ENCODE measurements at regions of chr17 and their contacts with region 1.

Region 1: DNA sequence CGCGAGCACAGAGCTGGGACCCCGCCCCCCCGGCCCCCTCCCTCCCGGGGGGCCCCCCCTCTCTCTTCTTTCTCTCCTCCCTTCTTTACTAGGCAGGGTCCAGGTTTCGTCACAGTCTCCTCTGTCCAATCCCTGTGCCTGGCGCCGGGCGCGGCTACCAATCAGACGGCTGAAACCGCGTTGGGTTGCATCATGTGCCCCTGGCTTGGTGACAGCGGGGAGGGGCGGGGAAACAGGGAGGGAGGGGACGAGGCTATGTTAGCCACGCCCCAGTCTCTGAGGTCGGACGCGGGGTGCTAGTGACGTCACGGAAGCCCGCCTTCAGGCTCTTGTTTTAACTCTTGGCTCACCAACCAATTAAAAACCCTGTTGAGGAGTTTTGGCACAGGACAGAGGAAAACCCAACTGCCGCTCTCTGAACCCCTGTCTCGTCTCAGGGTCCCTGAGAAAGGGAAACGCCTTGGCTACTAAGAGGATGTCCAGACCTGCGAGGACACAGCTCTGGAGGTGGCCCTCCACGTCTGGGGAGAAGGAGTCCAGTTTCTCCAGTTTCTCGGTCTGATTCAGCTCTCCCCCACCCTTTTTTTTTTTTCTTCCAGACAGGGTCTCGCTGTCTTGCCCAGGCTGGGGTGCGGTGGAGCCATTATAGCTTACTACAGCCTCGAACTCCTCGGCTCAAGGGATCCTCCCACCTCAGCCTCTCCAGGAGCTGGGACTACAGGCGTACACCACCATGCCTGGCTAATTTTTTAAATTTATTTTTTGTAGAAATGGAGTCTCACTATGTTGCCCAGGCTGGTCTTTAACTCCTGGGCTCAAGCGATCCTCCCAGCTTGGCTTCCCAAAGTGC is 439 bp upstream of the PLEKHH3 start:
- DNase-seq: peak; percentile 94 to 98
- H3K4me3 ChIP-seq: peak overlapping the region; percentile 95
- H3K27ac ChIP-seq: peak overlapping the region; percentile 61
- H3K4me1 ChIP-seq: peaks cover 46% of the 10 kb centered on the region
- H3K27me3 ChIP-seq: no peaks in the 10 kb centered on the region
- CTCF ChIP-seq: no peak

Region 2: GRCh38 chr17:42329025-42329976 is 347.9 kb before region 1 on chr17:
- CTCF ChIA-PET with region 1: no interaction called
- POLR2A ChIA-PET with region 1: no interaction called
- intact Hi-C with region 1: loop called (anchors 5 kb)
- DNase-seq: peak; percentile 71 to 92
- H3K4me3 ChIP-seq: peak overlapping the region; percentile 42; the same call in 1 of the 2 replicates
- H3K27ac ChIP-seq: peak overlapping the region; percentile 96
- H3K4me1 ChIP-seq: peaks cover 69% of the 10 kb centered on the region
- H3K27me3 ChIP-seq: no peaks in the 10 kb centered on the region
- CTCF ChIP-seq: no peak

Region 3: DNA sequence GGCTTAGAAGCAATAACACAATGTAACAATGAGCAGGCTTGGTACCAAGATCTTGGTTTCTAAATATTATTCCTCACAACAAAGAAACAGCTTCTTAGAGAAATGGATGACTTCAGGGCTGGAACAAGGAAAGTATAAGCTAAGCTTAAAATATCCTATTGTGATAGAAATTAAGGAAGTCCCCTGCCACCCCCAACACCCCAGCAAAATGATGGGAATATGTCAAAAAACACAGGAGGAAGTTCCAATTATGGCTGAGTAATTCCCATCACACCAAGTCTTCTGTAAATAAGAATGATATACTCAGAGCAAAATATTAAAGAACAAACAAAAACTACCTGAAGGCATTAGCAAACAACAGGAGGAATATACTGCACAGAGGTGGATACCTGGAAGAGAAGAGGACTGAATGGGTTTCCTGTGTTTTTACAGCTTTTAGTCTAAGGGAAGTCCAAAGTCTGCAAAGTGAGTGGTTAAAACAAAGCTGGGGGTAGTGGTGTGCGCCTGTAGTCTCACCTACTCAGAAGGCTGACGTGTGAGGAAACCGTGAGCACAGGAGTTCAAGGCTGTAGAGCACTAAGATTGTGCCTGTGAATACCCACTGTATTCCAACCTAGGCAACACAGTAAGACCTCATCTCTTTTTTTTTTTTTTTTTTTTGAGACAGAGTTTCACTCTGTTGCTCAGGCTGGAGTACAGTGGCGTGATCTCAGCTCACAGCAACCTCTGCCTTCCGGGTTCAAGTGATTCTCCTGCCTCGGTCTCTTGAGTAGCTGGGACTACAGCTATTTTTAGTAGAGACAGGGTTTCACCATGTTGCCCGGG is 235.7 kb before region 1 on chr17:
- CTCF ChIA-PET with region 1: interaction called, 11 read pairs
- POLR2A ChIA-PET with region 1: no interaction called
- intact Hi-C with region 1: no loop called
- DNase-seq: no peak
- H3K4me3 ChIP-seq: no peak overlapping the region
- H3K27ac ChIP-seq: no peak overlapping the region
- H3K4me1 ChIP-seq: no peaks in the 10 kb centered on the region
- H3K27me3 ChIP-seq: no peaks in the 10 kb centered on the region
- CTCF ChIP-seq: no peak

Region 4: DNA sequence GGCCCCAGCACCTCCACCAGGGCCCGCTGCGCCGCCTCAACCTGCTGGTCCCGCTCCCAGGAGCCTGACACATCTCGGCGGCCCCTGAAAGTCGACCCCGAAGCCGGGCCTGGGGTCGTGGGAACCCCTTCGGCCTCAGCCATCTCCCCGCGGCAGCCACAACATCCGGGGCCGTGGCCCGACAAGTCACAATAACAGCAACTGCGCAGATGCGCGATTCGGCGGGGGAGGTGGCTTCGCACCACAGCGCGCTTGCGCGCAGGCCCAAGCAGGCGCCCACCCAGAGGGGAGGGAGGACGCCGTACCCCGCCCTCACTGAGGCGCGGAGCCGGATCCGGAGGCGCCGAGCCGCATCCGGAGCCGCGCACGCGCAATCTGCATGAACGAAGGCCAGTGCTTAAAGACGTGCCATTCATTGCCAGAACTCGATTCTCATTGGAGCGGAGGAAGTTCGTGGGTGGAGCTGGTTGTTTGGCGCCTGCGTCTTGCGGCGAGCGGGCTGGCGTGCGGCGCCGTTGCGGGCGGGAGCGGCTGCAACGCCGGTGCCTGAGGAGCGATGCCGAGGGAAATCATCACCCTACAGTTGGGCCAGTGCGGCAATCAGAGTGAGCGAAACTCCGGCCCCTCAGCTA is 67.9 kb before region 1 on chr17 and contains the starts of genes RETREG3 and TUBG1:
- CTCF ChIA-PET with region 1: interaction called, 3 read pairs
- POLR2A ChIA-PET with region 1: interaction called, 8 read pairs
- intact Hi-C with region 1: loop called (anchors 1 kb)
- DNase-seq: peak; percentile 94 to 99
- H3K4me3 ChIP-seq: peak within 1 kb of the TSS; percentile 99
- H3K27ac ChIP-seq: peak within 1 kb of the TSS; percentile 48
- H3K4me1 ChIP-seq: peaks cover 13% of the 10 kb centered on the region
- H3K27me3 ChIP-seq: no peaks in the 10 kb centered on the region
- CTCF ChIP-seq: peak; percentile 44; the same call in 1 of the 2 replicates
- total RNA-seq, gene RETREG3: 57.0 and 61.7 TPM in 2 replicates
- total RNA-seq, gene TUBG1: 79.1 and 85.6 TPM in 2 replicates

Region 5: DNA sequence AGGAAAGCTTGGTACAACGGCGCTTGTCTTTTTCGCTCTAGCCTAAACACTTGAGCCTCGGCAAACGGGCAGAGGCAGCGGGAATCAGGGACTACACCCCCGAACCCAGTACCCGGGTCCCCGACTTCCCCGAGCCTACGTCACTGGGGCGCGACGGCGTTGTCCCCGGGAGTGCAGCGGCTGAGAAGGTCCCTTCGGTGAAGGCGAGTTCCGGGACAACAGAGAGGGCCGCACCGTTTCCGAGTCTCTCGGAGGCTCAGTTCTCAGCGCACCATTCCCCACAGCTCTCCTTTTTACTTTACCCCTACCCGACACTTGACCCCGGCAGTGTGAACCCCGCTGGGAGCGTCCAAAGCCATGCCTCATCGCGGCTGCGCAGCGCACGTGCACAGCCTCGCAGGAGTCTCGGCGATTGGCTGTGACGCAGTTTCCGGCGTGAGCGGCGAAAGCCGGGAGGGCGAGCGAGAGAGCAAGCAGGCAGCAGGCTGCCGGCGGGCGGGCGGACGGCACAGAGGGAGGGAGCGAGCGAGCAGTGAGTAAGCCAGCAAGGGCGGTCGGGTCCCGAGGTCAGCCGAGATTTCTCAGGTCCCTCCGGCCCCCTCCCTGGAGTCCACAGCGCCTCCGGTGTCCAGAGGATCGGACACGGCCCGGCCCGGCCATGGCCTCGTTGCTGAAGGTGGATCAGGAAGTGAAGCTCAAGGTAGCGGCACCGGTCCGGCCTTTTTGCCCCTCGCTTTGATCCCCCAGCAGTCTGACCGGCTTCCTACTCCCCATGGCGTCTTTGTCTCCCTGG is 155.9 kb after region 1 on chr17 and contains the start of gene PSME3:
- CTCF ChIA-PET with region 1: no interaction called
- POLR2A ChIA-PET with region 1: interaction called, 10 read pairs
- intact Hi-C with region 1: no loop called
- DNase-seq: peak; percentile 80
- H3K4me3 ChIP-seq: peak within 1 kb of the TSS; percentile 93
- H3K27ac ChIP-seq: peak within 1 kb of the TSS; percentile 77
- H3K4me1 ChIP-seq: peaks cover 16% of the 10 kb centered on the region
- H3K27me3 ChIP-seq: no peaks in the 10 kb centered on the region
- CTCF ChIP-seq: no peak
- total RNA-seq, gene PSME3: 115 and 122 TPM in 2 replicates

Region 6: DNA sequence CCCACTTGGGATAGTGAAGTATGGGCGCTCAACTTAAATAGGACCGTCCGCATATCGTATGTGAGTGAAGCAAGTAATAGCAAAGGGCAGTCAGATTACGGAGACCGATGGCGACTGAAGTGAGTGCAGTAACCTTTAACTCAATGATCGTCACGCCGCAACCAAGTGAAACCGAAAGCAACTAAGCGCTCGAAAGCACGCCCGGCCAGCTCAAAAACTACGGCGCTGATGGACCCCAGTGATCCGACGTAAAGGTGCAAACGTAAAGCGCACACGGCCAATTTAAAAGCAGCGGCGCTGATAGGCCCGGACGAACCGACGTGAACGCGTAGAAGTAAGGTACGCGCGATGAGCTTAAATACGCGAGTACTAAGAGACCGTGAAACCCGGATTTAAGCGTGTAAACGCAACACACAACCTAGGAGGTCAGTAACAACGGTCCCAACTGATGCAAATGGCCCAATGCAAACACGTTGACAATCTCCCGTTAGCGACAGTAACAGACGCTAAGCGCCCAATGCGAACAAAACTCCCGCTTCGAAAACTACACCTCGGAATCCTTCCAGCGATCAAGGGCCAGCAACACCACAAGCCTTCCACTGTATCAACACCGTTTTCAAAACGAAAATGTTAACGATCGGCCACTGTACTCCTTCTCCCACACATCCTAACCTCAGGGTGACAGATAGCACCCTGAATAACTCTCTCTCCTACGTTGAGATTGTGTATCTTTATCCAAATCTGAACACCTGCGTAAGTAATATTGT is 683.7 kb after region 1 on chr17:
- CTCF ChIA-PET with region 1: no interaction called
- POLR2A ChIA-PET with region 1: interaction called, 10 read pairs
- intact Hi-C with region 1: no loop called
- DNase-seq: peak; percentile 88 to 99
- H3K4me3 ChIP-seq: peak overlapping the region; percentile 64
- H3K27ac ChIP-seq: peak overlapping the region; percentile 92
- H3K4me1 ChIP-seq: peaks cover 44% of the 10 kb centered on the region
- H3K27me3 ChIP-seq: no peaks in the 10 kb centered on the region
- CTCF ChIP-seq: no peak

Measured in PC-9 (cell line).